ENCODE measurements at regions of chr21 and their contacts with region 1.

Region 1: GRCh38 chr21:15064576-15065391 is at the start of gene NRIP1:
- DNase-seq: peak; percentile 95
- H3K4me3 ChIP-seq: peak within 1 kb of the TSS; percentile 74 to 97 (median 96)
- H3K27ac ChIP-seq: peak within 1 kb of the TSS; percentile 96 to 99 (median 98)
- H3K4me1 ChIP-seq: peaks cover 0 to 44% (median 27%) of the 10 kb centered on the region in 4 donors
- H3K27me3 ChIP-seq: no peaks in the 10 kb centered on the region
- CTCF ChIP-seq: no peak
- EP300 ChIP-seq: no peak
- POLR2A ChIP-seq: peak; percentile 53 to 66
- total RNA-seq, gene NRIP1: 26.3 to 35.3 (median 28.8) TPM

Region 2: GRCh38 chr21:14382835-14383594 is 681.8 kb before region 1 on chr21 and contains the start of gene HSPA13:
- intact Hi-C with region 1: loop called (anchors 2 kb)
- DNase-seq: peak; percentile 100
- H3K4me3 ChIP-seq: peak within 1 kb of the TSS; percentile 62 to 88 (median 80)
- H3K27ac ChIP-seq: peak within 1 kb of the TSS; percentile 90 to 95 (median 92)
- H3K4me1 ChIP-seq: peaks cover 0 to 29% (median 17%) of the 10 kb centered on the region in 4 donors
- H3K27me3 ChIP-seq: no peaks in the 10 kb centered on the region
- CTCF ChIP-seq: no peak
- EP300 ChIP-seq: peak in 1 of 4 donors; percentile 28
- POLR2A ChIP-seq: peak; percentile 50 to 61
- total RNA-seq, gene HSPA13: 15.2 to 23.2 (median 15.8) TPM

Region 3: DNA sequence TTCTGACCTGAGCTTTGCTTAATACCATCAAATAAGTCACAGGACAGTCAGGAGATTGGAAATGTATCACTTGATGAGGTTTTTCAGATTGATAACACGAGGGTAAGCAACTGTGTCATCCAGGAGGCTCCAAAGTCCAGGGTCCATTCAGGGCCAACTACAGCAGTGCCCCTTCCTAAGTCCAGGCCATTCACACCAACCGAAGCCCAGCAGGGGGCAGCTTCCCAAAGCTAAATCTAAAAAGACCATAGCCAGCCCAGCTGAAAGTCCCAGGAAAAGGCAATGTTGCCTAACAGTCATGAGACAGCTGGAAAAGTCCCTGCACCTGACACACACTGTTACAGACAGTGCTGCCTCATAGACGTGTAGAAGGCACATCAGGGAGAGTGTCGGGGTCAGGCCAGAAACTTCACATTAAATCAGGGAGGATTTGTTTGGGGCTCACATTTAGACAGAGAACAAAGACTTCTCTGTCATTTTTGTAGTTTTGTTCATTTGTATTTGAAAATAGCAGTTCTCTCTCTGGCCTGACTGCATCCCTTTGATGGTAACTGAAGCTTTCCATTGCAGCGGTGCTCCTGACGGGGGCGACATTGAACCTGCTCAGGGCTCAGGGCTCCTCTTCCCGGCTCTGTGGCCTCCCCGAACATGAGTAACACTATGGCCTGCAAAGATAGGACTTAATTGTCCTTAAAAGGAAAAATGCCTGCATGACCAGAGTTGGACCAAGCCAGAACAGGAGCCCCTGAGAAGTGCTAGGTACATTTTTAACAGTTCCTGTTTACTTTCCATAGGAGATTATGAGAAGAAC is 200.4 kb before region 1 on chr21:
- intact Hi-C with region 1: loop called (anchors 2 kb)
- DNase-seq: peak; percentile 89
- H3K4me3 ChIP-seq: no peak overlapping the region
- H3K27ac ChIP-seq: peak overlapping the region; percentile 7 to 59 (median 34)
- H3K4me1 ChIP-seq: peaks cover 0 to 40% (median 19%) of the 10 kb centered on the region in 4 donors
- H3K27me3 ChIP-seq: no peaks in the 10 kb centered on the region
- CTCF ChIP-seq: peak; percentile 11 to 54 (median 40)
- EP300 ChIP-seq: no peak
- POLR2A ChIP-seq: no peak

Region 4: GRCh38 chr21:14977814-14978213 is 87.0 kb before region 1 on chr21:
- intact Hi-C with region 1: loop called (anchors 10 kb)
- DNase-seq: no peak
- H3K4me3 ChIP-seq: no peak overlapping the region
- H3K27ac ChIP-seq: no peak overlapping the region
- H3K4me1 ChIP-seq: peaks cover 0 to 10% (median 5%) of the 10 kb centered on the region in 4 donors
- H3K27me3 ChIP-seq: no peaks in the 10 kb centered on the region
- CTCF ChIP-seq: no peak
- EP300 ChIP-seq: no peak
- POLR2A ChIP-seq: no peak

Region 5: DNA sequence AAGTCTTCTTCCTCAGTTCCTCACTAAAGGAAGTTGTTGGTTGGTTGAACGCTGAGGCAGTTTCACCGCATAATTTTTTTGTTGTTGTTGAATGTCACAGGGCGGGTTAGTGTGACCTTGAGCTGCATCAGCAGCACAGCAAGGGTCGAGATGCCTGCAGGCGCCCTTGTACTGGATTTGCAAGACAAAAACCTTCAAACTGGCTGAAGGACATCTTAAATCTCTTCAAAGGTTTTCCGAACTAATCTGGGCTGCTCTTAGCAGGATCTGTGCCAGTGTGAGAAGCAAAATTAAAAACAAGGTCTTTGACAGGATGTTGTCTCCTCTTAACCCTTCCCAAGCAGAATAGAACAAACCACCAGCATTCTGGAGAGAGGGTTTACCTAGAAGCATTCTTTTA is 59.4 kb before region 1 on chr21:
- intact Hi-C with region 1: loop called (anchors 5 kb)
- DNase-seq: no peak
- H3K4me3 ChIP-seq: peak overlapping the region in 2 of 4 donors; percentile 8 to 9
- H3K27ac ChIP-seq: peak overlapping the region; percentile 6 to 59 (median 36)
- H3K4me1 ChIP-seq: peaks cover 0 to 65% (median 41%) of the 10 kb centered on the region in 4 donors
- H3K27me3 ChIP-seq: no peaks in the 10 kb centered on the region
- CTCF ChIP-seq: no peak
- EP300 ChIP-seq: no peak
- POLR2A ChIP-seq: no peak

Region 6: DNA sequence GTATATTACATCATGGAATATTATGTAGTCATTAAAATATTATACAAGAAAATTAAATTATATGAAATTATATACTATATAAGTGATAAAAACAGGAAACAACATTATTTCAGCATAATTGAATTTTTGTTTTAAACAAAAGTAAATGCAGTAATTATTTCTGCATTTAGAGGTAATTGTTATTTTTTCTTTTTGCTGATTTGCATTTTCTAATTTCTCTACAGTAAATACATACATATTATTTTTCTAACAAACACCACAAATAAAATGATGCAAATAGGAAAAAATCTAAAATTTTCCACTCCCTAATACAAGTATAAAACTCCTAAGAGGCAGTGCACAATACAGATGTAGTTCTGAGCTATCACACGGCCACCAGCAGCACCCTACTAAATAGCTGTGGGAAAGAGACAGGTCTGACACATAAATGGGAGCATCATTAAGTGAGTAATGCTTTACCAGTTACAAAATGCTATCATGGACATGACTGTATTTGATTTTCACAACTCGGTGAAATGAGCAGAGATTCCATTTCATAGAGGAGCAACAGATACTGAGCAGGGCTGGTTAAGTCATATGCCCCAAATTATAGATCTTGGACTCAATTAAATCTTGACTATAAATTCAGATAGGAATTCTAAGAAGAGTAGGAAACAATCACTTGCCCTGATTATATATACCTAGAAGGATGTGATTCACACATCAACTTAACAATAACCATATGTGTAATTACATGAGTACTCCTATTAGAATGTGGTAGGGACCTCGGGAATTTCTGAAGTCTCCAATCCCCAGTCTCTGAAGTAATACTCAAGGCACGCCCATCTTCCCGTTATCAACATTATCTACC is 48.9 kb before region 1 on chr21:
- intact Hi-C with region 1: no loop called
- DNase-seq: no peak
- H3K4me3 ChIP-seq: no peak overlapping the region
- H3K27ac ChIP-seq: no peak overlapping the region
- H3K4me1 ChIP-seq: peaks cover 0 to 25% (median 3%) of the 10 kb centered on the region in 4 donors
- H3K27me3 ChIP-seq: no peaks in the 10 kb centered on the region
- CTCF ChIP-seq: no peak
- EP300 ChIP-seq: no peak
- POLR2A ChIP-seq: no peak

Region 7: GRCh38 chr21:15144026-15144425 is 79.2 kb after region 1 on chr21:
- intact Hi-C with region 1: no loop called
- DNase-seq: no peak
- H3K4me3 ChIP-seq: no peak overlapping the region
- H3K27ac ChIP-seq: no peak overlapping the region
- H3K4me1 ChIP-seq: peaks cover 0 to 5% (median 0%) of the 10 kb centered on the region in 4 donors
- H3K27me3 ChIP-seq: no peaks in the 10 kb centered on the region
- CTCF ChIP-seq: no peak
- EP300 ChIP-seq: no peak
- POLR2A ChIP-seq: no peak

Region 8: GRCh38 chr21:15445327-15445726 is 380.5 kb after region 1 on chr21:
- intact Hi-C with region 1: loop called (anchors 10 kb)
- DNase-seq: no peak
- H3K4me3 ChIP-seq: no peak overlapping the region
- H3K27ac ChIP-seq: no peak overlapping the region
- H3K4me1 ChIP-seq: peaks cover 0 to 40% (median 30%) of the 10 kb centered on the region in 4 donors
- H3K27me3 ChIP-seq: no peaks in the 10 kb centered on the region
- CTCF ChIP-seq: no peak
- EP300 ChIP-seq: no peak
- POLR2A ChIP-seq: no peak

Region 9: GRCh38 chr21:15483138-15483780 is 418.5 kb after region 1 on chr21:
- intact Hi-C with region 1: loop called (anchors 5 kb)
- DNase-seq: peak; percentile 94
- H3K4me3 ChIP-seq: no peak overlapping the region
- H3K27ac ChIP-seq: no peak overlapping the region
- H3K4me1 ChIP-seq: peaks cover 0 to 6% (median 0%) of the 10 kb centered on the region in 4 donors
- H3K27me3 ChIP-seq: no peaks in the 10 kb centered on the region
- CTCF ChIP-seq: peak; percentile 79 to 92 (median 85)
- EP300 ChIP-seq: no peak
- POLR2A ChIP-seq: no peak

Measured in sigmoid colon (tissue), 7 donors.